H1 (cell line): ENCODE measurements at regions of chr12 and their contacts with region 1.

Region 1: GRCh38 chr12:68158432-68158831 is 1.1 kb downstream of the IFNG start:
- DNase-seq: no peak
- H3K4me3 ChIP-seq: no peak overlapping the region
- H3K27ac ChIP-seq: no peak overlapping the region
- H3K4me1 ChIP-seq: no peaks in the 10 kb centered on the region
- H3K27me3 ChIP-seq: no peaks in the 10 kb centered on the region
- CTCF ChIP-seq: peak in 2 of 3 experiments; percentile 49 to 52; a peak in 2 of 4 replicates
- EP300 ChIP-seq: no peak
- POLR2A ChIP-seq: no peak
- RAD21 ChIP-seq: peak; percentile 70 to 74

Region 2: DNA sequence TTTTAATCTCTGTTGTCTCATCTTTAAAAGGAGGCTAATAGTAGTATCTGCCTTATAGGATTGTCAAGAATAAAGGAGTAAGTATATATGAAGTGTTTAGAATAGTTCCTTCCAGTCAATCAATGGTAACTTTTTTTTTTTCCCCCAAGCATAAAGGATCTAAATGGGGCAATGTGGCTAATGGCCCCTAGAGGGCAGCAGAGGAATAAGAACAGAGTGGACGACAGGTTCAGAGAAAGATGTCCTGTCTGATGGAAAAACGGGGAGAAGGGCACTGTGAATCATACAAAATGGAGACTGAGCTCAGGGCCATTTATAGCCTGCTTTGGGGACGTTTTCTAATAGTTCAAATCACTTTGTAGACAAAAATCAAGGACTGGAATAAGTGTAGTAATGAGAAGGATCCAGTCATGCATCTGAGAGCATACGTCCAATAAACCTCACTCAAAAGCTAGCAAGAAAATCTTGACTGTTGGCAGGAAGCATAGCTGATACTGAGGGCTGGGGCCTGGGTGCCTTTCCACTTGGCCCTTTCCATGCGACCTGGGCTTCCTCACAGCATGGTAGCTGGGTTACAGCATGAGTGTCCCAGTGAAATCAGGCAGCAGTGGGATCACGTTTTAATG is 117.9 kb before region 1 on chr12:
- CTCF ChIA-PET with region 1: interaction called, 82 read pairs
- POLR2A ChIA-PET with region 1: no interaction called
- DNase-seq: peak in 1 of 2 experiments; percentile 67
- H3K4me3 ChIP-seq: no peak overlapping the region
- H3K27ac ChIP-seq: no peak overlapping the region
- H3K4me1 ChIP-seq: no peaks in the 10 kb centered on the region
- H3K27me3 ChIP-seq: no peaks in the 10 kb centered on the region
- CTCF ChIP-seq: peak; percentile 25 to 81 (median 76)
- EP300 ChIP-seq: no peak
- POLR2A ChIP-seq: no peak
- RAD21 ChIP-seq: peak; percentile 94 to 96

Region 3: GRCh38 chr12:68080577-68080976 is 77.9 kb before region 1 on chr12:
- CTCF ChIA-PET with region 1: interaction called, 19 read pairs
- POLR2A ChIA-PET with region 1: no interaction called
- DNase-seq: no peak
- H3K4me3 ChIP-seq: peak overlapping the region in 1 of 4 experiments; percentile 15; a peak in 1 of 8 replicates
- H3K27ac ChIP-seq: no peak overlapping the region
- H3K4me1 ChIP-seq: peaks cover 0 to 3% (median under 1%) of the 10 kb centered on the region in 4 experiments; a peak in 4 of 7 replicates
- H3K27me3 ChIP-seq: peaks cover 0 to under 1% (median under 1%) of the 10 kb centered on the region in 4 experiments; a peak in 3 of 7 replicates
- CTCF ChIP-seq: no peak
- EP300 ChIP-seq: no peak
- POLR2A ChIP-seq: no peak
- RAD21 ChIP-seq: peak in 1 of 2 experiments; percentile 12; a peak in 1 of 4 replicates

Region 4: DNA sequence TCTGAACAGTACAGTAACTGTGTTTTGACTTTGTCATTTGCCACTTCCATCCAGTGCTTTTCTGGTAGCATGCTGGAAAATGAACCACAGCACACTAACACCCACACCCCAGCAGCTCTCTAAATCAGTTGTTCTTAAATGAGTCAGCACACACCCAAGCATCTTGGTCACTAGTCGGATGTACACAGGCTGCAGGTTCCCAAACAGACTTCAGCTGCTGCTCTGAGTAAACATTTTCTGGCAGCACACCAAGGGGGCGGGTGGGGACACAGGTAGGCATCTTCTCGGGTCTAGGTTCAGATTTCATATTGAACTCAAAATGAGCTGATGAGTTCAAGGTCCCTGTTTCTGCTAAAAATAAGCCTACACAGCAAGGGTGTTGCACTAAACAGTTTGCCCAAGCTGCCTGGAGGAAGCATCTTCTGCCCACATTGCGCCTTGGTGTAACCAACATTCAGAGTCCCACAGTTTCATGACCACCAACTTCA is 38.7 kb before region 1 on chr12:
- CTCF ChIA-PET with region 1: interaction called, 40 read pairs
- POLR2A ChIA-PET with region 1: no interaction called
- DNase-seq: no peak
- H3K4me3 ChIP-seq: no peak overlapping the region
- H3K27ac ChIP-seq: no peak overlapping the region
- H3K4me1 ChIP-seq: peaks cover 0 to 5% (median 2%) of the 10 kb centered on the region in 4 experiments; a peak in 4 of 7 replicates
- H3K27me3 ChIP-seq: no peaks in the 10 kb centered on the region
- CTCF ChIP-seq: no peak
- EP300 ChIP-seq: no peak
- POLR2A ChIP-seq: no peak
- RAD21 ChIP-seq: no peak

Region 5: DNA sequence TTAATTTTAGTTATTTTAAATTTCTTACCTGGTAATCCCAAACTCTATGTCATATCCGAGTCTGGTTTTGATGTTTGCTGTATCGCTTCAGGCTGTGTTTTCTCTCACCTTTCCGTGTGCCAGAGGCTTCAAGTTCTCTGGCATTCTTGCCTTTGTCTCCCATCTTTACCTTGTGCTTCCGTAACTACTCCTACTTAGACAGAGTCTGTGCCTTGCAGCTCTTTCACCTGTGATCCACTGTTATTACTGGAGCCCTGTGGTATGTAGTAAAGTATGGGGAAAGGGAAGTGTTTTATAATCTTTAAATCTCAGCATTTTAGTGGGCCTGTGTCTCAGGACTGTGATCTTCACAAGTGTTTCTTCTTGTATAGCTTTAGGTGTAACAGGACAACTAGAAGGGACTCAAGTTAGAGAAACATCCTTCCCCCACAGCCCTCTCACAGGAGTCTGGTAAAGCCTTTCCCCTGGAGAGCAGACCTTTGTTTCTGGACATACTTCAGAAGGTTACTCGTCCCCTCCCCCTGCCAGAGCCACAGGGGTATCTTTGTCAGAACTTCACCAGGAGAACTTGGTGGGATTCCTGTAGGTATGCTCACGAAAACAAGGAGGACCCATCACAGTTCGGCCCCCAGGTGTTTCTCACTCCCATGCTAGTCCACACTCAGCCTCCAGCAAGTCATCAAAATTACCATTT is 10.0 kb before region 1 on chr12:
- CTCF ChIA-PET with region 1: interaction called, 46 read pairs
- POLR2A ChIA-PET with region 1: no interaction called
- DNase-seq: no peak
- H3K4me3 ChIP-seq: no peak overlapping the region
- H3K27ac ChIP-seq: no peak overlapping the region
- H3K4me1 ChIP-seq: peaks cover 0 to 4% (median 1%) of the 10 kb centered on the region in 4 experiments; a peak in 2 of 7 replicates
- H3K27me3 ChIP-seq: no peaks in the 10 kb centered on the region
- CTCF ChIP-seq: no peak
- EP300 ChIP-seq: no peak
- POLR2A ChIP-seq: no peak
- RAD21 ChIP-seq: no peak

Region 6: DNA sequence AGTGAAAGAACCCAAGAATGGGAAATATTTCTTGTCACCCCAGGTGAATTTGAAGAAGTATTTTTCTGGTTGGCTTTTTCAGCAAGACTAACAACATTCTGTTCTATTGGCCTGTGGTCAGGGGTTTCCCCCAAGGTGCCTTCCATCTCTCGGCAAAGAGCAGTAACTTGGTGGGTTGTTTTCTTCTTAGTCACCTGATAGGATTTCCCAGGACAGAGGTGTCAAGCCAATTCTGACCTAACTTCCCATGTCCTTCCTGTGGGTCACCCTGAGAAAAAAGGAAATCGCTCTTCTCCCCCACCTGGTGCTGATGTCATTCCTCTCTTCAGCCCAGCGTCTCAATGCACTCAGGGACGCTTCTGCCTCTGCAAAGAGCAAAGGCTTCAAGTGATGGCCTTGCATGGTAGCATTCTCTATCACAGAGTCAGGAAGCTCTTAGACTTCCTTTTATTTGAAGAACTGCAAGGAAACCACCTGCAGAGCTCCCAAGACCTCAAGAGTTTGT is 17.2 kb after region 1 on chr12:
- CTCF ChIA-PET with region 1: interaction called, 21 read pairs
- POLR2A ChIA-PET with region 1: no interaction called
- DNase-seq: no peak
- H3K4me3 ChIP-seq: no peak overlapping the region
- H3K27ac ChIP-seq: no peak overlapping the region
- H3K4me1 ChIP-seq: no peaks in the 10 kb centered on the region
- H3K27me3 ChIP-seq: no peaks in the 10 kb centered on the region
- CTCF ChIP-seq: no peak
- EP300 ChIP-seq: no peak
- POLR2A ChIP-seq: no peak
- RAD21 ChIP-seq: no peak

Region 7: GRCh38 chr12:68198507-68199086 is 40.2 kb after region 1 on chr12:
- CTCF ChIA-PET with region 1: no interaction called
- POLR2A ChIA-PET with region 1: no interaction called
- DNase-seq: no peak
- H3K4me3 ChIP-seq: no peak overlapping the region
- H3K27ac ChIP-seq: no peak overlapping the region
- H3K4me1 ChIP-seq: peaks cover 0 to 6% (median 3%) of the 10 kb centered on the region in 4 experiments; a peak in 4 of 7 replicates
- H3K27me3 ChIP-seq: no peaks in the 10 kb centered on the region
- CTCF ChIP-seq: no peak
- EP300 ChIP-seq: no peak
- POLR2A ChIP-seq: no peak
- RAD21 ChIP-seq: no peak

Region 8: DNA sequence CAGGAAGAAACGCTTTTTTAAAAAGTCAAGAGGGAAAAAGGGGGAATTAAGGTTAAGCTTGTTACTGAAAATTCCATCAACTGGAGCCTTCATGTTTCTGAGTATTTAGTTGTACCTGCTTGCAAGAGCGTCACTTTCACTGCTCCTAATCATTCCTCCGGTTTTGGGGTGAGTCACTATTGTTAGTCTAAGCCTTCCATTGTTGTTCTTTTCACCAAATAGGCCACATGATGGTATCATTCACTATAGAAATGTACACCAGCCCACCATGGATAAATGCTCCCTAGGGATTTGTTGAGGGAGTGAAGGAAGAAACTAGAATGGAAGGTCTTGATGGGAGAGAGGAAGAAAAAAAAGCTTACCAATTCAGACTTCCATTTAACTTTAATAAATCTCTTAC is 92.0 kb after region 1 on chr12:
- CTCF ChIA-PET with region 1: no interaction called
- POLR2A ChIA-PET with region 1: no interaction called
- DNase-seq: no peak
- H3K4me3 ChIP-seq: no peak overlapping the region
- H3K27ac ChIP-seq: no peak overlapping the region
- H3K4me1 ChIP-seq: 0 out of 7 replicates have a peak, but pooled peaks cover 0 to under 1% (median 0%) of the 10 kb centered on the region in 4 experiments
- H3K27me3 ChIP-seq: no peaks in the 10 kb centered on the region
- CTCF ChIP-seq: no peak
- EP300 ChIP-seq: no peak
- POLR2A ChIP-seq: no peak
- RAD21 ChIP-seq: no peak

Region 9: DNA sequence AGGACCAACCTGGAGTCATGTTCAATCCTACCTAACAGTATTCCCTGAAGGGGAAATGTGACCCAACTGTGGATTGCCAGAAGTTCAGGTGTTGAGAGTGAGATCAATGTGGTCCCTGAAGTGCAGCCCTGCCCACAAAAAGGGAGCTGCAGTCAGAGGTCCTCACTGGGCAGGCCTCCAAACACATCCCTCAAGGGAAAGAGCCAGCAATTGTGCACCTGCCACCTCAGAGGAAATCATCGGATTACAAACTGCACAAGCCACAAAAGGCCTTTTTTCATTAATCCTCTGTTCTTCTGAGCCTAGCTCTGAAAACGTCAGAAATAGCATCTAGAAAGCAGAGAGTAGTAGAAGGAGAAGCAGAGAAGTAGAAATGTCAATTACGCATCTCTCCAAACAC is 184.5 kb after region 1 on chr12:
- CTCF ChIA-PET with region 1: no interaction called
- POLR2A ChIA-PET with region 1: no interaction called
- DNase-seq: no peak
- H3K4me3 ChIP-seq: no peak overlapping the region
- H3K27ac ChIP-seq: no peak overlapping the region
- H3K4me1 ChIP-seq: peaks cover 0 to 5% (median 3%) of the 10 kb centered on the region in 4 experiments; a peak in 4 of 7 replicates
- H3K27me3 ChIP-seq: peaks cover 0 to 5% (median 0%) of the 10 kb centered on the region in 4 experiments; a peak in 1 of 7 replicates
- CTCF ChIP-seq: no peak
- EP300 ChIP-seq: no peak
- POLR2A ChIP-seq: no peak
- RAD21 ChIP-seq: no peak